Posterior vena cava (tissue), 2 donors: ENCODE measurements at regions of chr10 and their contacts with region 1.

Region 1: GRCh38 chr10:6401562-6402348 is 178.3 kb downstream of the PRKCQ start:
- DNase-seq: peak; percentile 88

Region 2: GRCh38 chr10:6108603-6109443 is 292.9 kb before region 1 on chr10:
- intact Hi-C with region 1: loop called (anchors 5 to 10 kb)
- DNase-seq: no peak

Region 3: GRCh38 chr10:6114805-6115341 is 286.9 kb before region 1 on chr10:
- intact Hi-C with region 1: loop called in 1 of 2 experiments (anchors 10 kb)
- DNase-seq: no peak

Region 4: DNA sequence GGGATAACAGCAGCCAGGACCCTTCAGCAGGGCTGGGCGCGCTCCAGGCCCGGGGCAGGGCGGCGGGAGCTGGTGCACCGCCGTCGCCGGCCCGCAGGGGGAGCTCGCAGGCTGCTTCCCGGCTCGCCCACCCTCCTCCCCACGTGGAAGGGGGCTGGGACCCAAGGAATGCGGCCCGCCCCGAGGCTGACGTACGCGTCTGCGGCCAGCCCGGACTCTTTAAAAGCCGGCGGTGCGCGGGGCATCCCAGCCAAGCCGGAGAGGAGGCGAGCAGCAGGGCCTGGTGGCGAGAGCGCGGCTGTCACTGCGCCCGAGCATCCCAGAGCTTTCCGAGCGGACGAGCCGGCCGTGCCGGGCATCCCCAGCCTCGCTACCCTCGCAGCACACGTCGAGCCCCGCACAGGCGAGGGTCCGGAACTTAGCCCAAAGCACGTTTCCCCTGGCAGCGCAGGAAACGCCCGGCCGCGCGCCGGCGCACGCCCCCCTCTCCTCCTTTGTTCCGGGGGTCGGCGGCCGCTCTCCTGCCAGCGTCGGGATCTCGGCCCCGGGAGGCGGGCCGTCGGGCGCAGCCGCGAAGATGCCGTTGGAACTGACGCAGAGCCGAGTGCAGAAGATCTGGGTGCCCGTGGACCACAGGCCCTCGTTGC is 198.9 kb before region 1 on chr10 and contains the start of gene PFKFB3:
- intact Hi-C with region 1: loop called (anchors 2 to 10 kb)
- DNase-seq: peak; percentile 99
- total RNA-seq, gene PFKFB3: 33.2 to 43.1 TPM

Region 5: DNA sequence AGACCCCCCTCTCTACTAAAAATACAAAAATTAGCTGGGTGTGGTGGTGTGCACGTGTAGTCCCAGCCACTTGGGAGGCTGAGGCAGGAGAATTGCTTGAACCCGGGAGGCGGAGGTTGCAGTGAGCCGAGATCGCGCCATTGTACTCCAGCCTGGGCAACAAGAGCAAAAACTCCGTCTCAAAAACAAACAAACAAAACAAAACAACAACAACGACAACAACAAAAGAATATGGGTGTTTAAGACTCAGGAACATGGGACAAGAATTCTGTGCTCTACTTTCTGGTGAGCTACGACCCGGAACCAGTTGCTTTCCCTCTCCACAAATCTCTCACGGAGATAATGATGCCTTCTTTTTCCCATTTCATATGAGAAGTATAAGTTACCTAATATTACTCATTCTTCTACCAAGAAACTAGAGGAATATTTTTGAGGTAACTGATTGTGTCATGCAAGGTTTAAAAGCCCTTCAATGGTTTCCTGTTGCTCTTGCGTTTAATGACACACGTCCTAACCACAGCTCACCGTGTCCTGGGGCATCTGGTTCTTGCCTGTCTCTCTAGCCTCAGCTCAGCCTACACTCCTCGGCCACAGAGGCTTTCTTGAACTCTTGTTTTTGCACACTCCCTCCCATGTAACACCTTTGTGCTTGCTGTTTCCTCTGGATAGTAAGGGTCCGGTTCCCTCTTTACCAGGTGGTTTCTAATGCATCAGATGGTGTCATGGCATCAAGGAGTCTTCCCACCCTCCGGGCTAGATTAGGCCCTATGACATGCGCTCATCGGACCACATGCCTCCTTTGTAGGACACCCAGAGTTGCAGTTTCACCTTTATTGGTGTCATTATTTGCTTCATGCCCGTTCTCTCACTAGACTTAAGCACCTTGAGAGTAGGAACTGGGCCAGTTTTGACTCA is 131.5 kb before region 1 on chr10:
- intact Hi-C with region 1: loop called in 1 of 2 experiments (anchors 5 kb)
- DNase-seq: no peak